Activated T-helper 2 cell treated with anti-CD3 and anti-CD28 coated beads, Interferon-gamma antibody, Interleukin-2, Interleukin-4, amounts not matched to agents 10 μg/mL and 5 μg/mL and 100 μg/mL, durations not matched to agents 14 hours and 24 hours and 36 hours (primary cell): ENCODE measurements at regions of chr10 and their contacts with region 1.

Region 1: DNA sequence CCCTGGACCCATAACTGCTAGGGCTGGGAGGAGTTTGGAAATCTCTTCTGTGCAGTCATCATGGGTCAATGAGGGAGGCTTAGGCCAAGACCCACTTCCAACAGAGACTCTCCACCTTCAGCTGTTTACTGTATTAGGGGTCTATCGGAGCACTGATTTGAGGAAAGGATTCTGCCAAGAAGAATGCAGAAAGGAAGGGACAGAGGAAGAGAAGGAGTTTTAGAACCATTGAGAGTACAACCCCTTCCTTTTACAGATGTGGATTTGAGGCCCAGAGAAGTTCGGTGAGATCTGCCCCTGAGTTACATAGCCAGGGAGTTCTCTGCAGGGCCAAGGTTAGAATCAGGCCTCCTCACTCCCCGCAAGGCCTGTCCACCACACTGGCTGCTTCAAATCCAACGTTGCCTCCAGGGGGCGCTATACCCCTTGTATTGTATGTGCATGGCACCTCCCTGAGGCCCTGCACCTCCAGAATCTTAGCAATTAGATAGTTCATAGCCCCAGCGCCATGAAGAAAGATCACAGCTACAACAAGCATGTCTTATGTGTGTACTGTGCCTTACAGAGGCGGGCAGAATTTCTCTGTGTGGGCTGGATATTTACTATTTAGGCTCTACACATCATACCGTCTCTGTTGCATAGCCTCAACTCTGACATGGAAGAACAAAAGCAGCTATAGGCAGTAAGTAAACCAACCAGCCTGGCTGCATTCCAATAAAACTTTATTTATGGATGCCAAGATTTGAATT is 246.8 kb downstream of the SKIDA1 start:
- DNase-seq: peak; percentile 48
- H3K4me3 Mint-ChIP-seq: no peak overlapping the region
- H3K27ac Mint-ChIP-seq: no peak overlapping the region
- H3K4me1 Mint-ChIP-seq: no peaks in the 10 kb centered on the region
- H3K27me3 Mint-ChIP-seq: no peaks in the 10 kb centered on the region

Region 2: GRCh38 chr10:21953585-21954057 is 675.0 kb after region 1 on chr10:
- intact Hi-C with region 1: loop called (anchors 5 kb)
- DNase-seq: no peak
- H3K4me3 Mint-ChIP-seq: no peak overlapping the region
- H3K27ac Mint-ChIP-seq: no peak overlapping the region
- H3K4me1 Mint-ChIP-seq: peaks cover 3% of the 10 kb centered on the region
- H3K27me3 Mint-ChIP-seq: no peaks in the 10 kb centered on the region